ENCODE measurements at regions of chrX and their contacts with region 1.

Region 1: DNA sequence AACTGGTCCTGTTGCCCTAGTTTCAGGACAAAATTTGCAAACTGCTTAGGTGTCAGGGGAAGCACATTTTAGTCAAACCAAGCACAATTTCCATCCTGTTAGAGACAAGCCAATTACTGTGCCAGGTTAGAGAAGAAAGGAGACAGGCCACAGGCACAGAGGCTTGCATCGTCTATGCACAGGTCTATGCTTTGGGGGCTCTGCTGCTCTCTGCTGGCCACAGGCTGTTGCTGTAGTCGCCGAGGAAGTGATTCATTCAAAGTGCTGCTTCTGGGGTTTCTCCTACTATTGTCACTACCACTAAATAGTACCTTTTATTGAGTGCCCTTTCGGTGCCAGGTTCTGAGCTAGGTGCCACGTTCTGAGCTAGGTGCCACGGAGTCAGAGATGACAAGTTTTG is 45.5 kb downstream of the VGLL1 start:
- DNase-seq: peak; percentile 30 to 74 (median 62)
- ATAC-seq: peak; percentile 99
- H3K4me3 ChIP-seq: no peak overlapping the region
- H3K4me3 Mint-ChIP-seq: peak overlapping the region in 2 of 10 donors; percentile 20 to 63
- H3K27ac ChIP-seq: no peak overlapping the region
- H3K27ac Mint-ChIP-seq: peak overlapping the region in 8 of 9 donors; percentile 10 to 83 (median 67)
- H3K4me1 ChIP-seq: peaks cover 3 to 4% of the 10 kb centered on the region in 2 donors
- H3K4me1 Mint-ChIP-seq: peaks cover 0 to 22% (median 11%) of the 10 kb centered on the region in 7 donors
- H3K27me3 ChIP-seq: no peaks in the 10 kb centered on the region
- H3K27me3 Mint-ChIP-seq: no peaks in the 10 kb centered on the region

Region 2: GRCh38 chrX:136397001-136397400 is 180.6 kb before region 1 on chrX:
- CTCF ChIA-PET with region 1: no interaction called
- POLR2A ChIA-PET with region 1: no interaction called
- intact Hi-C with region 1: loop called in 1 of 2 experiments (anchors 5 kb)
- DNase-seq: peak in 2 of 9 donors; percentile 1 to 2
- ATAC-seq: no peak
- H3K4me3 ChIP-seq: no peak overlapping the region
- H3K4me3 Mint-ChIP-seq: no peak overlapping the region
- H3K27ac ChIP-seq: no peak overlapping the region
- H3K27ac Mint-ChIP-seq: no peak overlapping the region
- H3K4me1 ChIP-seq: no peaks in the 10 kb centered on the region
- H3K4me1 Mint-ChIP-seq: no peaks in the 10 kb centered on the region
- H3K27me3 ChIP-seq: no peaks in the 10 kb centered on the region
- H3K27me3 Mint-ChIP-seq: peaks cover 0 to 3% (median 0%) of the 10 kb centered on the region in 5 donors

Region 3: DNA sequence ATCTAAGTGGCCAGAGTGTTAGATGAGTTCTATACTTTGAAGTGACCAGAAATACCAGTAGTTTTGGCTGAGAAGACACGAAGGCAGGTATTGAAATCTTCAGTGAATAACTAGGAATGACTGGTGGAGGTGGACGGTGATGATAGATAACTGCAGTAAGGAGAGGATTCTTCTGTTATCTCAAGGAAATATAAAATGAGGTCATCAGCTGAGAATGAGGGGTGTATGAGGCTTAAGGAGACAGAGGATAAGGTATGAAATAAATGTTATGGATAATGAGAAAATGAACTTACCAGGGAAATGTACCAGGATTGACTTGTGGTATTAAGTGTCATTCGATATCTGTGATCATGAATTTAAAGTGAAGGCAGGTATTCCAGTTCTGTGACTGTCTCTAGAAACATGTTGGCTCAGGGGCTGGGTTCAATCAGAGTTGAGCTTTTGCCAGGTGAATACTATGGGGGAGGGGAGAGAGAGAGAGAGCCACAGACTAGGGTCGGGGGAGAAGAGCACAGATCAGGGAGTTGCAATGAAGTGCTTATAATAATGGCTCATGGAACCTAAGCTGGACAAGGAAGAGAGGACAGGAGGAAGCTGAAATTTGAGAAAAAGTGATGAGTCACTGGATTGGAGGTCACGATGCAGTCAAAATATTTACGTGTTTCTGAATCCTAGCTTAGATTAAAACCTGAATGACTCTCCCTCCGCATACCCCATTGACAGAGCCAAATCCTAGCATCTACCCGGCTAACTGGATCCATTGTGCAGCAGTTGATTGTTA is 127.3 kb before region 1 on chrX:
- CTCF ChIA-PET with region 1: no interaction called
- POLR2A ChIA-PET with region 1: no interaction called
- intact Hi-C with region 1: no loop called
- DNase-seq: no peak
- ATAC-seq: no peak
- H3K4me3 ChIP-seq: no peak overlapping the region
- H3K4me3 Mint-ChIP-seq: no peak overlapping the region
- H3K27ac ChIP-seq: no peak overlapping the region
- H3K27ac Mint-ChIP-seq: no peak overlapping the region
- H3K4me1 ChIP-seq: no peaks in the 10 kb centered on the region
- H3K4me1 Mint-ChIP-seq: no peaks in the 10 kb centered on the region
- H3K27me3 ChIP-seq: no peaks in the 10 kb centered on the region
- H3K27me3 Mint-ChIP-seq: no peaks in the 10 kb centered on the region

Region 4: DNA sequence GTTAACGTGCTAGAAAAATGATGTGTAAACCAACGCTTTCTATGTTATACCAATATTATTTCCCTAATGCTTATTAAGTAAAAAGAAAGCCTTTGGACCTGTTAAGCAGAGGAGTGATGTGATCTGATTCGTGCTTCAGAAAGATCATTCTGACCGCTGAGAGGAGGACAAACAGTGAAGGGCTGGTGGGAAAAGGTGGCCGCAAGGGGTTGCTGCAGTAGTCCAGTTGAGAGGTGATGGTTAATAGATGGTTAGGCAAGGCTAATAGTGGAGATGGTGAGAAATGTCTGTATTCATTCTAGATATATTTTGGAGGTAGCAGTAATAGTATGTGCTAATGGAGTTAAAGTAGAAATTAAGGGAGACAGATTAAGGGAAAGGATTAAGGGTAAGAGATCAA is 58.5 kb before region 1 on chrX:
- CTCF ChIA-PET with region 1: no interaction called
- POLR2A ChIA-PET with region 1: no interaction called
- intact Hi-C with region 1: loop called in 1 of 2 experiments (anchors 5 kb)
- DNase-seq: no peak
- ATAC-seq: no peak
- H3K4me3 ChIP-seq: no peak overlapping the region
- H3K4me3 Mint-ChIP-seq: no peak overlapping the region
- H3K27ac ChIP-seq: no peak overlapping the region
- H3K27ac Mint-ChIP-seq: no peak overlapping the region
- H3K4me1 ChIP-seq: no peaks in the 10 kb centered on the region
- H3K4me1 Mint-ChIP-seq: peaks cover 0 to 13% (median 8%) of the 10 kb centered on the region in 7 donors
- H3K27me3 ChIP-seq: no peaks in the 10 kb centered on the region
- H3K27me3 Mint-ChIP-seq: no peaks in the 10 kb centered on the region

Measured in naive thymus-derived CD4-positive, alpha-beta T cell (primary cell).